Dorsolateral prefrontal cortex (tissue), 120 donors: ENCODE measurements at regions of chr18 and their contacts with region 1.

Region 1: DNA sequence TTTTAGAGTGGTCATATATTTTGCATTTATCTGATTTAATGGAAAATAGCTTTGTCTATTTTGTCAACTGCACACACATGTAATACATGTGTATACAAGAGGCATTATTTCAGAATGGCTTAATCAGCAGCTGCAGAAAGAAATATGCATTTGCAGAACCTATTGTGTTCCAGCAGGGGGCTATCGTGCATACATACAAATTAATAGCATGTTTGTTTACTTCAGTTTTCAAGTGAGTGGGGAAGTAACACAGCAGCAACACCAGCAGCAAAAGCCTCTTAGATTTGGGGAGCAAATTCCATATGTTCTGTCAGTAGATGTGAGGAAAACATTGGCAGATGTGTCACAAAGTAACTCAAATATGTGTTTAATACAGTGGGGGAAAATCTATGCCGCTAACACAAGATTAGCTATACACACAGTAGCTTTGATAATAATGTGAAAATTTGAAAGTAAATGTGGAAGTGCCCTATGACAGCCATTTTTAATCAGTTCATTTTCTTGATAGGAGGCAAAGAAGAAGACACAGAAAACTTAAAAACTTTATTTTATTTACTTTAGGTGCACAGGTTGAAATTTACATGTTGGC is 218.1 kb downstream of the WDR7 start:
- DNase-seq: peak in 1 of 10 donors; percentile 12
- H3K4me3 ChIP-seq: peak overlapping the region in 2 of 59 donors; percentile 3 to 28
- H3K27ac ChIP-seq: peak overlapping the region in 25 of 59 donors; percentile 10 to 70 (median 29)
- H3K27me3 ChIP-seq: no peaks in the 10 kb centered on the region
- CTCF ChIP-seq: peak; percentile 48 to 86 (median 70)

Region 2: DNA sequence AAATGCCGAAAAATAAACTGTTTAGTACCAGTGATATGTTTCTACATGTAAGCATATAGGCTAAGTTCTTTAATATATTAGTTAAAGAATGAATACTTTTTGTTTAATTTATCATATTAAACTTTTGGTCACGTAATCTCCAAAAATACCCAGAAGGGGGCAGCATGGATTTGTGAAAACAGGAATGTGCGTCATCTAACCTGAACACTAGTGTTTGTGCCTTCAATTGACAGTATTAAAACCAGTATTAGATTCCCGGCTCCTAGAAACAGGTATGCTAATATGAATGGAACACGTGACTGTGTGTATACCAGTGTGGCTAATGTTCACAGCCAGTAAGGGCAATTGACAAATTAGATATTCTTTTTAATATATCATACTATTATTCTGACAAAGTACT is 166.3 kb before region 1 on chr18:
- intact Hi-C with region 1: no loop called
- DNase-seq: no peak
- H3K4me3 ChIP-seq: no peak overlapping the region
- H3K27ac ChIP-seq: peak overlapping the region in 1 of 59 donors; percentile 2
- H3K27me3 ChIP-seq: no peaks in the 10 kb centered on the region
- CTCF ChIP-seq: peak in 55 of 56 donors; percentile 23 to 72 (median 54)

Region 3: DNA sequence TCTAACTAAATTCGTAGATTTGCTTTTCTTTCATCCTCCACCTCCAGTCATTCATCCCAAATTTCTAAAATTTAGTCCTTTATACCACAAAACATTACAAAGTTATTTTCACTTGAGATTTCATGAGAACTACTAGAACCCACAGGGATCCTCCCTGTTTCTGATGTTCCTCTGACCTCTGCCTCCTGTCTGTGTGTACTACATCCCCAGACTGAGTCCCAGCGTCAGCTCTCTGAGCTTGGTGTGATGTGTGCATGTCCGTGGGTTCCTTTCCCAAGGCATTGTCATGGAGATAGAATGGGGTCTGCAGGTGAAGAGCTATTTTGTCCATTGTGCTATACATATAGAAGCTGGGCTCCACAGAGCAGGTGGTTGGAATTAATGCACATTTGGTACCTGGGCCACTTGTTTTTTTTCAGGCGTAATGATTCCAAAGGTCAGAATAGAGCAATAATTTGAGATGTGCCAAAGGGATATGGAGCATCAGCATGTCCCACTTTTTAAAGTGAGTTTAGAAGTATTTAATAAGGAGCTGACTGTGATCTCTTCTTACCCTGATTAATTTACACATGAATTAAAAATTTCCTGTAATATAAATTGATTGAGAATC is 126.4 kb after region 1 on chr18:
- intact Hi-C with region 1: loop called (anchors 5 kb)
- DNase-seq: peak in 2 of 10 donors; percentile 17 to 33
- H3K4me3 ChIP-seq: no peak overlapping the region
- H3K27ac ChIP-seq: no peak overlapping the region
- H3K27me3 ChIP-seq: no peaks in the 10 kb centered on the region
- CTCF ChIP-seq: peak in 49 of 56 donors; percentile 17 to 77 (median 44)